ENCODE measurements at regions of chr1 and their contacts with region 1.

Region 1: DNA sequence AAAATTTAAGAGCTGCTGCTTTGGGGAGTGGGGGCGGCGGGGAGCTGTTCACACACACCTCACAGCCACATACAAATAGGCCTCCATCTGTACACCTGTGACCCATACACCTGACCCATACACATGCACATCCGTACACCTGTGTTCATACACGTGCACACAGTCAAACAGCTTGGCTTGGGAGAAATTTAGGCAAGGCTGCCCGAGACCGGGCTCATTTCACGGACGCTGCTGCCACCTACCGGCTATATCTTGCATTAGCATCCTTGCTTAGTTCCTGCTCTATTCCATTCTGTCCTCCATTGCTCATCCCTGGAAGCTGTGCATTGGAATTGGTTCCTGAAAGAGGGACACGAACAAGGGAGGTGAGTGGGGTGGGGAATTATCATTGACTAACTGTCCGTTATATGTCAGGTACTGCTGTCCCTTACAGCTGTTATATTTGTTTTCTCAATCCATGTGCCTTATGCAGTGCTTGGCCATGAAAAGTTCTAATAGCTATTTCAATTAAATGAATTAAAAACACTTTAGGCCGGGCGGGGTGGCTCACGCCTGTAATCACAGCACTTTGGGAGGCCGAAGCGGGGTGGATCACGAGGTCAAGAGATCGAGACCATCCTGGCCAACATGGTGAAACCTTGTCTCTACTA is 37.1 kb upstream of the EPB41 start:
- DNase-seq: peak; percentile 80 to 89 (median 86)
- H3K4me3 ChIP-seq: no peak overlapping the region
- H3K27ac ChIP-seq: no peak overlapping the region
- H3K4me1 ChIP-seq: peaks cover 0 to 4% (median 0%) of the 10 kb centered on the region in 3 donors
- H3K27me3 ChIP-seq: no peaks in the 10 kb centered on the region
- CTCF ChIP-seq: peak; percentile 98

Region 2: DNA sequence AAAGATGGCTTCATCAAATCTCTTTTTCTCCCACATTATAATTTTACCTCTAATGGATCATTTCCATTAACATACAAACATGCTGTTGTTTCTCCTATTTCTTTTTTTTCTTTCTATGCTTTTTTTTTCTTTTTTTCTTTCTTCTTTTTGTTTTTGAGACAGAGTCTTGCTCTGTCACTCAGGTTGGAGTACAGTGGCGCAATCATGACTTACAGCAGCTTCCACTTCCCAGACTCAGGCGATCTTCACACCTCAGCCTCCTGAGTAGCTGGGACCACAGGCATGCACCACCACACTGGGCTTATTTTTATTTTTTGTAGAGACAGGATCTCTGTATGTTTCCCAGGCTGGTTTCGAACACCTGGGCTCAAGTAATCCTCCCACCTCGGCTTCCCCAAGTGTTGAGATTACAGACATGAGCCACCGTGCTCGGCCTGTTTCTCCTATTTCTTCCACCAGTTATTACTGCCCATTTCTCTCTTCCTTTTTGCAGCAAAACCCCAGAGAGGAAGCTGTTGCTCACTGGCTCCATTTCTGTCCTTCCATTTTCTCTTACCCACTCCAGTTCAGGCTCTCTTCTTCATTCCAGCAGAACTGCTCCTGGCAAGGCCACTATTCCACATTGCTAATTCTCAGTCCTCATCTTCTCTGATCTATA is 97.4 kb before region 1 on chr1:
- intact Hi-C with region 1: loop called (anchors 10 kb)
- DNase-seq: no peak
- H3K4me3 ChIP-seq: no peak overlapping the region
- H3K27ac ChIP-seq: no peak overlapping the region
- H3K4me1 ChIP-seq: peaks cover 0 to 6% (median 1%) of the 10 kb centered on the region in 3 donors
- H3K27me3 ChIP-seq: no peaks in the 10 kb centered on the region
- CTCF ChIP-seq: no peak

Region 3: GRCh38 chr1:28933277-28933676 is 56.0 kb after region 1 on chr1:
- intact Hi-C with region 1: no loop called
- DNase-seq: no peak
- H3K4me3 ChIP-seq: no peak overlapping the region
- H3K27ac ChIP-seq: no peak overlapping the region
- H3K4me1 ChIP-seq: peaks cover 0 to 2% (median 0%) of the 10 kb centered on the region in 3 donors
- H3K27me3 ChIP-seq: no peaks in the 10 kb centered on the region
- CTCF ChIP-seq: no peak

Region 4: DNA sequence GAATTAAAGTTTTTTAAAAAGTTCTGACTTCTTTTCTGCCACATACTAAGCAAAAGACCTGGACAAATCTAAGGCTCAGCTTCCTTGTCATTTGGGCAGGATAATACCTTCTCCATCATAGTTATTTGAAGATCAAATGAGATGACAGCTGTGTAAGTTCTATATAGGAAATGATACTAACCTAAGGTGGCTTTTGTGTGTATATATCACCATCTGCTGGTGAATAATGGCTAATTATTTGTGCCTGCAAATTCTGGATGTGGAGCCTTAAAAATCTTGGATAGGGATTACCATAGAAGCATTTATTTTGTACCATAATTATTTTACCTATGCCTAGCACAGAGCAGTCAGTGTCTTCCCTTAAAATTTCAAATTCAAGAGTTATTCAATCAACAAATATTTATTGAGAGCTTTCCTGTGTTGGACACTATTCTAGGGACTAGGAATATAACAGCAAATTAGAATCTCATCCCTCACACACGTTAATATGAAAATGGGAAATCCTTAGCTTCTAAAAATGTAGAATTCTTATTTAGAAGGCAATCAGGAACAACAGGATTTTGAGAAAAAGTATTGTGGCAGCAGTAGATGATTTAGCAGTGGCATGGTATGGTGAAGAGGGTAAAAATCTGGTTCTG is 156.7 kb after region 1 on chr1:
- intact Hi-C with region 1: loop called (anchors 5 kb)
- DNase-seq: peak in 2 of 5 donors; percentile 55 to 67
- H3K4me3 ChIP-seq: no peak overlapping the region
- H3K27ac ChIP-seq: no peak overlapping the region
- H3K4me1 ChIP-seq: no peaks in the 10 kb centered on the region
- H3K27me3 ChIP-seq: no peaks in the 10 kb centered on the region
- CTCF ChIP-seq: peak; percentile 65

Region 5: DNA sequence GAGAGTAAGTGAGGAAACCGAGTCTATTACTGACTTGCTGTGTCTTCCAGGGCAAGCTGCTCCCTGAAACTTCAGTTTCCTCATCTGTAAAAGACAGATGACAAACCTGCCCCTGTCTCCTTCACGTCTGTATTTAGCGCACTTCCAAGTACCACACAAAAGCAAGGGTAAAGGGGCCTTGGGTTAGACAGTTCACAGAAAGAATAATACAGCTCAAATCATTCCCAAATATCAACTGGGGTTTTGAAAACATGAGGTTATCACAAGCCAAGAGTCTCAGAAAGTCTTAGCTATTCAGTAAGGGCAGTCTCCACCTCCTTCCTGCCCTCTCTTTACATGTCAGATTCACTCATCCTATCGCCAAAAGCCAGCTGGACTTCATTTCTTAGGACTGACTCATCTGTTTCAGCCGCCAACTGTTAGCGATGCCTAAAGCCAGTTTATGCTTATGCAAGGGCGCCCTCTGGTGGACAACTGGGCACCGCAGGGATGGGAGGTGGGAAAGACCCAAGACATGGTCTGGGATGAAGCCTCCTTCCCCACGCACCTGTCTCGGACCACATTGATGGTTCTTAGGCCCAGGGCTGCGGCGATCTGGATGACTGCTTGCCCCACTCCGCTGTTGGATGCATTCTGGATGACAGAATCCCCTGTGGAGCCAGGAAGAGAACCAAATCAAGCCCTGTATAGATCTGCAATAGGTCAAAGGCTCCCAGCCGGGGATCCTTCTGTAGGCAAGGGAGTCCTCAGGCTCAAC is 325.5 kb after region 1 on chr1:
- intact Hi-C with region 1: loop called (anchors 5 kb)
- DNase-seq: peak; percentile 91 to 97 (median 94)
- H3K4me3 ChIP-seq: no peak overlapping the region
- H3K27ac ChIP-seq: peak overlapping the region; percentile 66 to 77
- H3K4me1 ChIP-seq: peaks cover 0 to 8% (median 4%) of the 10 kb centered on the region in 3 donors
- H3K27me3 ChIP-seq: no peaks in the 10 kb centered on the region
- CTCF ChIP-seq: peak; percentile 98

Measured in kidney (tissue), 22 donors.